ENCODE measurements at regions of chr2 and their contacts with region 1.

Region 1: GRCh38 chr2:27174316-27175040 is 25.7 kb downstream of the TCF23 start:
- DNase-seq: no peak
- H3K4me3 ChIP-seq: no peak overlapping the region
- H3K27ac ChIP-seq: no peak overlapping the region
- H3K4me1 ChIP-seq: peaks cover 0 to 6% (median 2%) of the 10 kb centered on the region in 4 experiments
- H3K27me3 ChIP-seq: peaks cover 0 to 11% (median 0%) of the 10 kb centered on the region in 5 experiments

Region 2: DNA sequence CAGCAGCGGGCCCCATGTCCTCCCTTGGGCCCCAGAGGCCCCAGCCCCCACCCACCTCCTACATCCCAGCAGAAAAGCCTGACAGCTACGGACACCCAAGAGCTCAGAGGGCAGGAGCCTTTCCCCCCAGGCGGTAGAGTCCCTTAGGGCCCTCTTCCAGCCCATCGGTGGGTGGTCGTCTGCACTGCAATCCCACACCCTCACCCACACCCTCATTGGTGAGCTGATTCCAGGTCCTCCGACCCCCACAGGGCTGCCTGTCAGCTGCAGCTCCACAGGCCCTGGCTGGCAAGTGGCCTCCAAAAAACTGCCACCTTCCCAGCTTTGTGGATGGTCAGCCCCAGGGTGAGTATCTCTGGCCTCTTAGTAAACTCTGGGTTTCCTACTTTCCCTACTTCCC is 15.2 kb before region 1 on chr2:
- CTCF ChIA-PET with region 1: interaction called, 11 read pairs
- POLR2A ChIA-PET with region 1: no interaction called
- DNase-seq: no peak
- H3K4me3 ChIP-seq: no peak overlapping the region
- H3K27ac ChIP-seq: no peak overlapping the region
- H3K4me1 ChIP-seq: no peaks in the 10 kb centered on the region
- H3K27me3 ChIP-seq: no peaks in the 10 kb centered on the region

Region 3: GRCh38 chr2:27185331-27186026 is 11.0 kb after region 1 on chr2:
- CTCF ChIA-PET with region 1: interaction called, 14 read pairs
- POLR2A ChIA-PET with region 1: no interaction called
- DNase-seq: peak in 2 of 3 donors; percentile 56 to 65
- H3K4me3 ChIP-seq: no peak overlapping the region
- H3K27ac ChIP-seq: no peak overlapping the region
- H3K4me1 ChIP-seq: peaks cover 0 to 3% (median 1%) of the 10 kb centered on the region in 4 experiments
- H3K27me3 ChIP-seq: no peaks in the 10 kb centered on the region

Measured in common myeloid progenitor, CD34-positive (primary cell).